Activated CD4-positive, alpha-beta memory T cell treated with anti-CD3 and anti-CD28 coated beads for 36 hours (primary cell): ENCODE measurements at regions of chr3 and their contacts with region 1.

Region 1: GRCh38 chr3:117019082-117019713 is 309.6 kb downstream of the TUSC7 start:
- DNase-seq: peak; percentile 45
- H3K4me3 Mint-ChIP-seq: no peak overlapping the region
- H3K27ac Mint-ChIP-seq: no peak overlapping the region
- H3K4me1 Mint-ChIP-seq: no peaks in the 10 kb centered on the region
- H3K27me3 Mint-ChIP-seq: no peaks in the 10 kb centered on the region

Region 2: GRCh38 chr3:117719316-117719926 is 700.2 kb after region 1 on chr3:
- CTCF ChIA-PET with region 1: no interaction called
- POLR2A ChIA-PET with region 1: no interaction called
- intact Hi-C with region 1: loop called (anchors 5 kb)
- DNase-seq: no peak
- H3K4me3 Mint-ChIP-seq: no peak overlapping the region
- H3K27ac Mint-ChIP-seq: no peak overlapping the region
- H3K4me1 Mint-ChIP-seq: no peaks in the 10 kb centered on the region
- H3K27me3 Mint-ChIP-seq: no peaks in the 10 kb centered on the region

Region 3: GRCh38 chr3:117997201-117998049 is 978.2 kb after region 1 on chr3:
- CTCF ChIA-PET with region 1: no interaction called
- POLR2A ChIA-PET with region 1: no interaction called
- intact Hi-C with region 1: loop called (anchors 2 kb)
- DNase-seq: peak; percentile 67
- H3K4me3 Mint-ChIP-seq: no peak overlapping the region
- H3K27ac Mint-ChIP-seq: no peak overlapping the region
- H3K4me1 Mint-ChIP-seq: no peaks in the 10 kb centered on the region
- H3K27me3 Mint-ChIP-seq: peaks cover 2% of the 10 kb centered on the region

Region 4: DNA sequence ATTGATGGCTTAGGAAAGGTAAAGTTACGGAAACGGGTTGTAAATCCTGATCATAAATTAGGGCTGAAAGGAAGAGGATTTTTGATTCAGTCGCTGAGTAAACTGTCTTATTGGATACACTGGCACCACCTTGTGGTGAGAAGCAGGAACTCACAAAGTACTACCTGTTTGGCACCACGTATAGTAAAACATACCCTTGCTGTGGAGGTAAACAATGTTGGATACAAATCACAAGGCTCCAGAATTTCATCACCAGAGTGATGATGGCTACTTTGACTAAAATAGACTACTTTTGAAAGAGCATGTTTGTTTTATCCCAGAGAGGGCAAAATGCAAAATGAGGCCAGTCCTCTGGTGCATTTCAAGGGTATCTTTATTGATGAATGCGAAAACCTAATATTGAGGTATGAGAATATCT is 1798.6 kb after region 1 on chr3:
- CTCF ChIA-PET with region 1: no interaction called
- POLR2A ChIA-PET with region 1: no interaction called
- intact Hi-C with region 1: loop called (anchors 5 kb)
- DNase-seq: peak; percentile 38
- H3K4me3 Mint-ChIP-seq: no peak overlapping the region
- H3K27ac Mint-ChIP-seq: no peak overlapping the region
- H3K4me1 Mint-ChIP-seq: no peaks in the 10 kb centered on the region
- H3K27me3 Mint-ChIP-seq: peaks cover 5% of the 10 kb centered on the region